ENCODE measurements at regions of chr21 and their contacts with region 1.

Region 1: GRCh38 chr21:17185674-17186073 is 327.2 kb upstream of the CXADR start:
- DNase-seq: no peak
- ATAC-seq: peak; percentile 89

Region 2: DNA sequence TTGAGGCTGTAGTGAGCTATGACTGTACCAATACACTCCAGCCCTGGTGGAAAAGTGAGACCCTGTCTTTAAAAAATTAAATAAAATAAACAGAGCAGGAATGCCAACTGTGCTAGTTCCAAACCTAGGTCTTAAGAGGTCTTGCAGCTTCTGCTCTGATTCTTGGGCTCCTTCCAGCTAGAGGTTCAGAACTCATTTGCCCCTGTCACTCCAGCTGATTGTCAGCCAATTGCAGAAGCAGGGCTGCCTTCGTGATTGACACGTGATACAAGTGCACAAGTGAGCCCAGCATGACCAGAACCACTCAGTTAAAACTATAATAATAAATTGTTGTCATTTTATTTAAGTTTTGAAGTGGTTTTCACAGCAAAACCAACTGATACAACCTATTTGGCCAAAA is 1157.5 kb before region 1 on chr21:
- intact Hi-C with region 1: loop called (anchors 5 kb)
- DNase-seq: no peak
- ATAC-seq: no peak